CD4-positive, alpha-beta T cell (primary cell): ENCODE measurements at regions of chr1 and their contacts with region 1.

Region 1: DNA sequence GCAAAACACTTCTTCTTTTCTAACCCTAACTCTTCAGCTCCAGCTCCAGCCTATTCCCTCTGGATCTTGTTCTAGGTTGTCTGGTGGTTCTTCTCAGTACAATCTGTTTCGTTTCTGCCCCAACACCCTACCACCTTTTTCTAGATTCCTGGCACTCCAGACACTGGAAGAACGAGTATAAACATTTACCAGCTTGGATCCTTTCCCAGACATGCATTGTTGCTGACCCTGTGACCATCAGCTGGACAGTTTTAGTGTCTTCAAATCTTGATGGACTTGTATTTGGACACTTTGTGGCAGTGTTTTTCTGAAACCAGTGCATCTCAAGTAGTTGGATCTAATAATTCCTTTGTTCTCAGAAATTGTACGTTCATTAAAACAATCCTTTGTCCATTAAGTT is 30.6 kb upstream of the CACNA1E start:
- DNase-seq: no peak
- ATAC-seq: no peak
- H3K4me3 ChIP-seq: no peak overlapping the region
- H3K4me3 Mint-ChIP-seq: no peak overlapping the region
- H3K27ac ChIP-seq: no peak overlapping the region
- H3K27ac Mint-ChIP-seq: no peak overlapping the region
- H3K4me1 ChIP-seq: no peaks in the 10 kb centered on the region
- H3K4me1 Mint-ChIP-seq: no peaks in the 10 kb centered on the region
- H3K27me3 ChIP-seq: peaks cover 0 to 7% of the 10 kb centered on the region in 2 experiments
- H3K27me3 Mint-ChIP-seq: peaks cover 17% of the 10 kb centered on the region
- CTCF ChIP-seq: no peak

Region 2: DNA sequence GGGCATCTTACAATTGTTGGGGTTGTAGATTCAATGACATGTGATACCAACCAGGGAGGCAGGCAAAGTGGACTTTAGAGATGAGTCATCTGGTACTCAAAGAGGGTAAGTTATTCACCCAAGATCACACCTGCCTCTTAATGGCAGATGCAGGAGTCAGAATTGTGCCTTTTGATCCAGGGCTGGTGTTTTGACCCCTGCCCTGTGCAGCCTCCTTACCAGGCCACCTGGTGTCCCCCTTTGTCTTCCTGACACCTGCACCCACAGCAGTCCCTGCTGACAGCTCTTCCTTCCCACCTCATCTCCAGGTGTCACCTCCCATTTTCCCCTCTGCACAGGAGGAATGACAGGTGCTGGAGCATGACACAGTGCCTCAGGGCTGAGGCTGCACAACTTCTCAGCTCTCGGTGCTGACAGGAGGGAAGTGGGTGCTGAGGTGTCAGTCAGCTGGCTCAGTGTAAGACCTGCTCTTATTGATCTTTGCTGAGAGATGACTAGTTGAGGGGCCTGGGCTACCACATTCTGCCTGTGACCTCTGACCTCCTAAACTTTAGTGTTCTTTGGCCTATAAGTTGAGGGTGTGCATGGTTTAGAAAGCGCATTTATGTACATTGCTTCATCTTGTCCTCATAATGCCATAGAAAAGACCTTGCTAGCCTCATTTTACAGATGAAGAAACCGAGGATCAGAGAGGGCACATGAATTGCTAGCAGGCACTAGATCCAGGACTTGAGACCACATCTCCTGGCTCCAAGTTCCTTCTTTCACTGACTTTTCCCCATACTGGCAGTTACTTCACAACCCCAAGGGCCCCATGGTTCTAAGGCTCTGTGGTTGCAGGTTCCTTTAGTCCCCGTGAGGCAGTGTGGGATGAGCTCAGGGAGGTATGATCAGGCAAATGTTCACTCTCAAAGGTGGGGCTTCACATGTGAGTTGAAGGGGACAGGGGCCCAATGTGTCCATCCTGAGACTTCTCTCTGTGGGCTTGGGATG is 61.8 kb after region 1 on chr1:
- CTCF ChIA-PET with region 1: no interaction called
- POLR2A ChIA-PET with region 1: no interaction called
- intact Hi-C with region 1: loop called in 1 of 2 experiments (anchors 10 kb)
- DNase-seq: no peak
- ATAC-seq: no peak
- H3K4me3 ChIP-seq: no peak overlapping the region
- H3K4me3 Mint-ChIP-seq: no peak overlapping the region
- H3K27ac ChIP-seq: no peak overlapping the region
- H3K27ac Mint-ChIP-seq: no peak overlapping the region
- H3K4me1 ChIP-seq: no peaks in the 10 kb centered on the region
- H3K4me1 Mint-ChIP-seq: no peaks in the 10 kb centered on the region
- H3K27me3 ChIP-seq: peaks cover 0 to 3% of the 10 kb centered on the region in 2 experiments
- H3K27me3 Mint-ChIP-seq: peaks cover 11% of the 10 kb centered on the region
- CTCF ChIP-seq: no peak